ENCODE measurements at regions of chr19 and their contacts with region 1.

Region 1: GRCh38 chr19:12847159-12848139 is 9.1 kb downstream of the MAST1 start:
- DNase-seq: peak; percentile 91
- ATAC-seq: peak; percentile 99
- H3K4me3 Mint-ChIP-seq: peak overlapping the region; percentile 67
- H3K27ac Mint-ChIP-seq: peak overlapping the region; percentile 63
- H3K4me1 Mint-ChIP-seq: peaks cover 3% of the 10 kb centered on the region
- H3K27me3 Mint-ChIP-seq: peaks cover 25% of the 10 kb centered on the region
- CTCF ChIP-seq: peak; percentile 100

Region 2: DNA sequence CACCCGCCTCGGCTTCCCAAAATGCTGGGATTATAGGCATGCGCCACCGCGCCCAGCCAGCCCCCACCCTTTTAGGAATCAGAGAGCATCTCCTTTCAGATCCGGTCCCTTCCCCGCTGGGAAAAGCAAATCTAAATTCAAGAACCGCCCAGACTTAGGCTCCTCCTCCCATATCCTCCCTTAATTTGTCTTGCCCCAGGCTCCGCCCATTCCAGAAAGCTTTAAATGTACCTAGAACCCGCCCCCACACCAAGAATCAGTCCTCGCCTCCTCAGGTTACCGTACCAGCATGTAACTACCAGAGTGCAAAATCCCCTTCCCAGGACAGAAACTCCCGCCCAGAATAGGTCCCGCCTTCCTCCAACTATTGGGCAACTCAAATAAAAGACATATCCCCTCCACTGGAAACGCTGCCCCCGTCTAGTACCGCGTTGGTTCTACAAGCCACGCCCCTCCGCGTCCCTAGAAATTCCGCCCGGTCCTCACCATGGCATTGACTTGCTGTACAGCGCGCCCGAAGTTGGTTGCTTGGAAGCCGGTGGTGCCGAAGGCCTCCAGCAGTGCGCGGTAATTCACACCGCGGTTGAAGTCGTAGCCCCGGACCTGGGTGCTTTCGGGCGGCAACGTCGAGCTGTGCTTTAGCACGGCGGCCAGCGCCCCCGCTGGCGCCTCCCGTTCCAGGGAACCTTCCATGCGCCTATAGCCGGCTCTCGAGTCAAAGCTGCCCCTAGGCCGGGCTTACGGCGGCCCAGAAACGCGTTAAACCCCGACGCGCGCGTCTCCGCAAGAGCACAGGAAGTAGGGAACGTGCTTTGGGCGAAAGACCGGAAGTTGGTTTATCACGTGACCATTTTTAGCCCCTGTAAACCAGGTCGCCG is 166.1 kb before region 1 on chr19 and contains the start of gene DHPS:
- CTCF ChIA-PET with region 1: interaction called, 10 read pairs
- POLR2A ChIA-PET with region 1: no interaction called
- intact Hi-C with region 1: no loop called
- DNase-seq: peak; percentile 97
- ATAC-seq: peak; percentile 89
- H3K4me3 Mint-ChIP-seq: peak within 1 kb of the TSS; percentile 93
- H3K27ac Mint-ChIP-seq: peak within 1 kb of the TSS; percentile 94
- H3K4me1 Mint-ChIP-seq: peaks cover 25% of the 10 kb centered on the region
- H3K27me3 Mint-ChIP-seq: no peaks in the 10 kb centered on the region
- CTCF ChIP-seq: no peak
- total RNA-seq, gene DHPS: 113 TPM

Region 3: GRCh38 chr19:12736995-12737834 is 110.2 kb before region 1 on chr19 and contains the start of gene GET3:
- CTCF ChIA-PET with region 1: interaction called, 12 read pairs
- POLR2A ChIA-PET with region 1: no interaction called
- intact Hi-C with region 1: no loop called
- DNase-seq: peak; percentile 89
- ATAC-seq: peak; percentile 84
- H3K4me3 Mint-ChIP-seq: peak within 1 kb of the TSS; percentile 99
- H3K27ac Mint-ChIP-seq: peak within 1 kb of the TSS; percentile 98
- H3K4me1 Mint-ChIP-seq: peaks cover 35% of the 10 kb centered on the region
- H3K27me3 Mint-ChIP-seq: no peaks in the 10 kb centered on the region
- CTCF ChIP-seq: no peak
- total RNA-seq, gene GET3: 50.7 to 52.2 TPM

Region 4: GRCh38 chr19:12777217-12778016 is 70.0 kb before region 1 on chr19:
- CTCF ChIA-PET with region 1: interaction called, 10 read pairs
- POLR2A ChIA-PET with region 1: no interaction called
- intact Hi-C with region 1: no loop called
- DNase-seq: peak; percentile 85
- ATAC-seq: peak; percentile 32
- H3K4me3 Mint-ChIP-seq: peak overlapping the region; percentile 85
- H3K27ac Mint-ChIP-seq: peak overlapping the region; percentile 92
- H3K4me1 Mint-ChIP-seq: peaks cover 45% of the 10 kb centered on the region
- H3K27me3 Mint-ChIP-seq: no peaks in the 10 kb centered on the region
- CTCF ChIP-seq: peak; percentile 99

Region 5: DNA sequence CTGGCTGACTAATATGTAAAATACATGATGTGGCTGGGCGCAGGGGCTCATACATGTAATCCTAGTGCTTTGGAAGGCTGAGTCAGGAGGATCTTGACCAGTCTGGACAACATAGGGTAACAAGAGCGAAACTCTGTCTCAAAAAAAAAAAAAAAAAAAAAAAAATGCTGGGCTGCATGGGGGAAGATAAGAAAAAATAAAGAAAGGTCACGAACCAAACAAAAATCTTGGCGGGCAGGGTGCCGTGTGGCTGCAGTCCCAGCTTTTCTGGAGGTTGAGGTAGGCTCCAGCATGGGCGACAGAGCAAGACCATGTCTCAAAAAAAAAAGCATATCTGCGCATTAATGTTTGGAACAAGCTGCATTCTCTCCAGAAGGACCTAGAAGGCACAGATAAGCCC is 32.4 kb before region 1 on chr19:
- CTCF ChIA-PET with region 1: interaction called, 26 read pairs
- POLR2A ChIA-PET with region 1: no interaction called
- intact Hi-C with region 1: no loop called
- DNase-seq: no peak
- ATAC-seq: no peak
- H3K4me3 Mint-ChIP-seq: no peak overlapping the region
- H3K27ac Mint-ChIP-seq: no peak overlapping the region
- H3K4me1 Mint-ChIP-seq: no peaks in the 10 kb centered on the region
- H3K27me3 Mint-ChIP-seq: no peaks in the 10 kb centered on the region
- CTCF ChIP-seq: no peak

Region 6: DNA sequence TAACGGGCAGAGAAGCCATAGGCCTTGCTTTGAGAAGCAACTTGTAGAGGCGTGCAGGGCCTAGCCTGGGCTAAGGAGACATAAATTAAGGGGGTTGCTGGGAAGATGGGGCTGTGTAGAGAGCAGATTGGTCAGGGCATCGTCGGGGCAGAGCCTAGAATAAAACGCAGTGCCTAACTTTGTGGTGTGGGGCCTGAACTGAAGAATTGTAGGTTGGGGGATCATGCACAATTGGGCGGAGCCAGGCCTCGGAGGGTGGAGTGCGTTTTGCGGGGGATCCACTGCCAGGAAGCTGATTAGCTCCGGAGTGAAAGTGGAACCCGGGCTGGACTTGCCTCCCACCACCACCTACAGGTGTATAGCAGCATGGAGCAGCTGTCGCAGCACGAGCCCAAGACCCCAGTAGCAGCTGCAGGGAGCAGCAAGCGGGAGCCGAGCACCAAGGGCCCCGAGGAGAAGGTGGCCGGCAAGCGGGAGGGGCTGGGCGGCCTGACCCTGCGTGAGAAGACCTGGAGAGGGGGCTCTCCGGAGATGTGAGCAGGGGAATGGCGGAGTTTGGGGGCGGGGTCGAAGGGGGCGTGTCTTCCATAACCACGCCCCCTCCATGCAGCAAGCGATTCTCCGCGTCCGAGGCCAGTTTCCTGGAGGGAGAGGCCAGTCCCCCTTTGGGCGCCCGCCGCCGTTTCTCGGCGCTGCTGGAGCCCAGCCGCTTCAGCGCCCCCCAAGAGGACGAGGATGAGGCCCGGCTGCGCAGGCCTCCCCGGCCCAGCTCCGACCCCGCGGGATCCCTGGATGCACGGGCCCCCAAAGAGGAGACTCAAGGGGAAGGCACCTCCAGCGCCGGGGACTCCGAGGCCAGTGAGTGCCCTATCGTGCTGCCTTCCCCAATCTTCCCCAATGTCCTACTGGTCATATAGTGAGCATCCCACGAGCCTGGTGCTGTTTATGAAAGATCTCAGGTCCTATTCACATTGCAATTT is 20.0 kb after region 1 on chr19:
- CTCF ChIA-PET with region 1: interaction called, 38 read pairs
- POLR2A ChIA-PET with region 1: interaction called, 3 read pairs
- intact Hi-C with region 1: no loop called
- DNase-seq: peak; percentile 84
- ATAC-seq: peak; percentile 87
- H3K4me3 Mint-ChIP-seq: peak overlapping the region; percentile 60
- H3K27ac Mint-ChIP-seq: peak overlapping the region; percentile 1
- H3K4me1 Mint-ChIP-seq: peaks cover 6% of the 10 kb centered on the region
- H3K27me3 Mint-ChIP-seq: no peaks in the 10 kb centered on the region
- CTCF ChIP-seq: no peak

Region 7: DNA sequence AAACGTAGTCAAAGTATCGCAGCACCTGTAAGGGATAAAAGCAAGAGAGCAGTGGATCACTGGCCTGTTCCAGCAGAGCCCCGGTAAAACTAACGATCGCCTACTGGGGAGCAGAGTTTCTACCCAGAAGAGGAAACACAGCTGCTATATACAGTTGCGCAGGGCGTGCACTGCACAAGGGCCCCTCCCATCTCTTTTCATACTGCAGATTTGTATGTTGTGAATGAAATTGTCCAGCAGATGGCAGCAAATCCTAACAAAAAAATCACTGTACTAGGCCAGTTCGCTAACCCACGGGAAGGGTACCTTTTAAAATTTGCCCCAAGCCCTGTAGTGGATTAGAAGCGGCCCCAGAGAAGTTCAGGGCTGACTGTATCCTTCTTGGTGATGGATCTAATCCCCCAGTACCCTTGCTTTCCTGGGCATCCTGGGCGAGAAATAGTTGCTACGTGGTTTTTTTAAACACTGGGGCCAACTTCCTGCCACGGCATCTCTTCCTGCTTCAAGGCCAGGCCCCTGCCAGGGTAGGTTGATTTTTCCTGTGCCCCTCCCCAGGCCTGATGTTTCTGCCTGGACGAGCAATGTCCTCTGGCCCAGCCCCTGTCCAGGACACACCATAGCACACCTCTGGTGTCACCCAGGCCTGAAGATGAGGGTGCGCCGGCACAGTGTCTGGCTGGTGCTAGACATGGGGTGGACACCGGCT is 429.8 kb after region 1 on chr19:
- CTCF ChIA-PET with region 1: no interaction called
- POLR2A ChIA-PET with region 1: no interaction called
- intact Hi-C with region 1: no loop called
- DNase-seq: peak; percentile 78
- ATAC-seq: peak; percentile 94
- H3K4me3 Mint-ChIP-seq: peak overlapping the region; percentile 26
- H3K27ac Mint-ChIP-seq: peak overlapping the region; percentile 80
- H3K4me1 Mint-ChIP-seq: peaks cover 10% of the 10 kb centered on the region
- H3K27me3 Mint-ChIP-seq: peaks cover 4% of the 10 kb centered on the region
- CTCF ChIP-seq: peak; percentile 66

Measured in activated CD8-positive, alpha-beta T cell treated with anti-CD3 and anti-CD28 coated beads for 36 hours (primary cell).